Right cardiac atrium (tissue), 5 donors: ENCODE measurements at regions of chr3 and their contacts with region 1.

Region 1: DNA sequence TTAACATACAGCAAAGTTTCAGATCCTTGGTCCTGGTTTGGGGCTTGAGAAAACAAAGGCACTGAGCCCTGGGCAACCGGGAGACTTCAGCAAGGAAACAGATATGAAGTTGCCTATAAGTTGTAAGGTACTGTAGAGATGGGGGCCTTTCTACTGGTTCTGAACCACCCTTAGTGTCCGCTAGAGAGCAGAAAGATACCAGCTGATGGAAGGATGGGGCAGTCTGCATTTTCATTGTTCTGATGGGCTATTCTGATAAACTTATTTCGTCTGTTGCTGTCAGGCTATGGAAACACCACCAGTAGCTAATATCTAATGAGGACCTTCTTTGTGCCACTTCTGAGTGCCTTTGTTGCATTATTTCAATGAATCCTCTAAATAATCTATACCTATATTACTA is 38.7 kb downstream of the FGD5 start:
- DNase-seq: no peak
- ATAC-seq: no peak
- H3K4me3 ChIP-seq: no peak overlapping the region
- H3K27ac ChIP-seq: no peak overlapping the region
- H3K4me1 ChIP-seq: peaks cover 12% of the 10 kb centered on the region
- H3K27me3 ChIP-seq: no peaks in the 10 kb centered on the region

Region 2: GRCh38 chr3:14810070-14810784 is 47.3 kb before region 1 on chr3:
- intact Hi-C with region 1: loop called in 1 of 4 experiments (anchors 5 kb)
- DNase-seq: peak; percentile 76 to 87 (median 86)
- ATAC-seq: peak; percentile 74 to 82
- H3K4me3 ChIP-seq: peak overlapping the region; percentile 66
- H3K27ac ChIP-seq: peak overlapping the region; percentile 81
- H3K4me1 ChIP-seq: peaks cover 5% of the 10 kb centered on the region
- H3K27me3 ChIP-seq: no peaks in the 10 kb centered on the region